K562 (cell line): ENCODE measurements at regions of chr9 and their contacts with region 1.

Region 1: GRCh38 chr9:128159784-128160602 is at the start of gene BBLN:
- DNase-seq: peak; percentile 99 to 100 (median 100)
- ATAC-seq: peak; percentile 91
- H3K4me3 ChIP-seq: peak within 1 kb of the TSS; percentile 72
- H3K27ac ChIP-seq: peak within 1 kb of the TSS; percentile 90
- H3K4me1 ChIP-seq: peaks cover 10 to 43% of the 10 kb centered on the region in 2 experiments
- H3K27me3 ChIP-seq: no peaks in the 10 kb centered on the region
- CTCF ChIP-seq: peak in 1 of 3 experiments; percentile 24; a peak in 2 of 6 replicates
- EP300 ChIP-seq: peak; percentile 16; the same call in 1 of the 2 replicates
- POLR2A ChIP-seq: peak; percentile 97
- RAD21 ChIP-seq: peak; percentile 10 to 20; a peak in 2 of 4 replicates
- polyA plus RNA-seq, gene BBLN: 4.2 to 13.7 TPM

Region 2: DNA sequence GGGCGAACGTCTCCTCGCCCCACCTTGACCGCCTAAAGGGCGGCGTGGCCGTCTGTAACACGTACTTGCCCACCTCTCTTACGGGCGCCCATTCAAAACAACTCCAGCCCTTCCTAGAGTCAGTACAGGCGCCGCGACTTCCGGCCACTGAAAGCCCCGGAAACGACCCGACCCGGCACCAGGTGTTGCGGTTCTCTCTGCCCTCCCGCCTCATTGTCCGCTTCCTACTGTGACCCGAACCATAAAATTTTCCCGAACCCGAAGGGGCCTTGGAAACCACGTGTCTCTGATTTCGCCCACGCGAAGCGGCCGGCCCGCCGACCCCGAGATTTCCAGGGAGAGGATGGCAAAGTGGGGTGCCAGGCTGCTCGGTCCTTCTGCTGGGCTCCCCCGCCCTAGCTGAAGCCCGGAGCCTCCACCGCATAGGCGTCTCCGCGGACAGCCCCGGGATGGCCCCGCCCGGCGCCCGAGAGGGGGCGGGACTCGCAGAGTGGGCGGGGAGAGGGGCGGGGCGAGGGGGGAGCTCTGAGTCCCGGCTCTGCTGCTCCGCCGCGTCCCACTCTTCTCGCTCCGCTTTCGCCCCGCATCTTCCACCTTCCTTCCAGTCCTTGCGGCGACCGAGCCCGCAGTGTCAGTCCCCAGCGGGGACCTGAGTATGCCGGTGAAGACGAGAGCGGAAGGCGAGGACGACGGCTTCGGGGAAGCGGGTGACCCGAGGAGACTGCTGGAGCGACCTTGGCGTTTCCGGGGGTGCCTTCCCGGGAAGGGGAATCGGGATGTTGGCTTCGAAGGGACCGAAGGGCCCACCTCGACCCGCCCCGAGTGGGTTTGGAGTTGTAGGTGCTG is 31.8 kb before region 1 on chr9:
- CTCF ChIA-PET with region 1: no interaction called
- POLR2A ChIA-PET with region 1: no interaction called
- in situ Hi-C with region 1: no loop called
- intact Hi-C with region 1: loop called (anchors 1 kb)
- DNase-seq: peak; percentile 89 to 93 (median 90)
- ATAC-seq: peak; percentile 82
- H3K4me3 ChIP-seq: peak overlapping the region; percentile 98
- H3K27ac ChIP-seq: peak overlapping the region; percentile 93
- H3K4me1 ChIP-seq: peaks cover 10 to 38% of the 10 kb centered on the region in 2 experiments
- H3K27me3 ChIP-seq: no peaks in the 10 kb centered on the region
- CTCF ChIP-seq: no peak
- EP300 ChIP-seq: no peak
- POLR2A ChIP-seq: peak; percentile 71; the same call in 1 of the 2 replicates
- RAD21 ChIP-seq: no peak

Region 3: GRCh38 chr9:128175102-128175563 is 15.1 kb after region 1 on chr9:
- CTCF ChIA-PET with region 1: no interaction called
- POLR2A ChIA-PET with region 1: interaction called, 155 read pairs
- in situ Hi-C with region 1: no loop called
- intact Hi-C with region 1: no loop called
- DNase-seq: no peak
- ATAC-seq: no peak
- H3K4me3 ChIP-seq: no peak overlapping the region
- H3K27ac ChIP-seq: peak overlapping the region; percentile 5; the same call in 1 of the 3 replicates
- H3K4me1 ChIP-seq: peaks cover 0 to 24% of the 10 kb centered on the region in 2 experiments; a peak in 3 of 5 replicates
- H3K27me3 ChIP-seq: no peaks in the 10 kb centered on the region
- CTCF ChIP-seq: no peak
- EP300 ChIP-seq: no peak
- POLR2A ChIP-seq: no peak
- RAD21 ChIP-seq: no peak

Region 4: GRCh38 chr9:128182893-128183588 is 23.0 kb after region 1 on chr9:
- CTCF ChIA-PET with region 1: no interaction called
- POLR2A ChIA-PET with region 1: interaction called, 155 read pairs
- in situ Hi-C with region 1: no loop called
- intact Hi-C with region 1: no loop called
- DNase-seq: no peak
- ATAC-seq: peak; percentile 9
- H3K4me3 ChIP-seq: no peak overlapping the region
- H3K27ac ChIP-seq: no peak overlapping the region
- H3K4me1 ChIP-seq: peaks cover 10 to 22% of the 10 kb centered on the region in 2 experiments; a peak in 4 of 5 replicates
- H3K27me3 ChIP-seq: no peaks in the 10 kb centered on the region
- CTCF ChIP-seq: no peak
- EP300 ChIP-seq: no peak
- POLR2A ChIP-seq: no peak
- RAD21 ChIP-seq: no peak

Region 5: GRCh38 chr9:128191406-128192046 is 31.5 kb after region 1 on chr9 and contains the start of gene CIZ1:
- CTCF ChIA-PET with region 1: no interaction called
- POLR2A ChIA-PET with region 1: interaction called, 15 read pairs
- in situ Hi-C with region 1: no loop called
- intact Hi-C with region 1: loop called (anchors 1 kb)
- DNase-seq: peak; percentile 96 to 99 (median 99)
- ATAC-seq: peak; percentile 96
- H3K4me3 ChIP-seq: peak within 1 kb of the TSS; percentile 92
- H3K27ac ChIP-seq: peak within 1 kb of the TSS; percentile 82
- H3K4me1 ChIP-seq: peaks cover 26 to 34% of the 10 kb centered on the region in 2 experiments
- H3K27me3 ChIP-seq: no peaks in the 10 kb centered on the region
- CTCF ChIP-seq: peak; percentile 87 to 97 (median 95)
- EP300 ChIP-seq: peak; percentile 59
- POLR2A ChIP-seq: no peak
- RAD21 ChIP-seq: peak; percentile 35 to 43
- polyA plus RNA-seq, gene CIZ1: 6.6 to 12.6 TPM

Region 6: DNA sequence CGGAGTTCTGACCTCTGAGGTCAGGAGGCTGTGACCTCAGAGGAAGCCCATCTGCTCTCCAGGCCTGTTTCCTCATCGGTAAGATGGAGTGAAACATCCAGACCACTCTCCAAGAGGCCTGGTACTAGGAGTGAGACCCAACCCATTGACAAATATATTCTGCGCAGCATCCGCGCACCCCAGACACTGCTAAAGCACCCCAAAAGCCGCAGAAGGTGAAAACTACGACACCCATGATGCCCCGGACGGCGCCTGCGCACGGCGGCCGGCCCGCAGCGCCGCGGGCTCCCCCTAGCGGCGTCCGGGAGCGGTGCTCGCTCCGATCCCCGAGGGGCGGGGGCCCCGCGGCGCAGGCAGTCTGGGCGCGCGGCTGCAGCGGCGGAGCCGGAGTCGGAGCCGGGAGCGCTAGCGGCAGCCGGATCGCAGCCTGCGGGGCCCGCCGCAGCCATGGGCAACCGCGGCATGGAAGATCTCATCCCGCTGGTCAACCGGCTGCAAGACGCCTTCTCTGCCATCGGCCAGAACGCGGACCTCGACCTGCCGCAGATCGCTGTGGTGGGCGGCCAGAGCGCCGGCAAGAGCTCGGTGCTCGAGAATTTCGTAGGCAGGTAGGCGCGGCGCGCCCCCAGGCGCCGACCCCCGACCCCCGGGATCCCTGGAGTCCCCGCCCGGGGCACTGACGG is 43.2 kb after region 1 on chr9 and contains the start of gene DNM1:
- CTCF ChIA-PET with region 1: no interaction called
- POLR2A ChIA-PET with region 1: interaction called, 7 read pairs
- in situ Hi-C with region 1: no loop called
- intact Hi-C with region 1: loop called (anchors 5 kb)
- DNase-seq: peak; percentile 91 to 100 (median 100)
- ATAC-seq: peak; percentile 92
- H3K4me3 ChIP-seq: peak within 1 kb of the TSS; percentile 55
- H3K27ac ChIP-seq: peak within 1 kb of the TSS; percentile 20; the same call in 2 of the 3 replicates
- H3K4me1 ChIP-seq: peaks cover 19 to 36% of the 10 kb centered on the region in 2 experiments
- H3K27me3 ChIP-seq: no peaks in the 10 kb centered on the region
- CTCF ChIP-seq: peak; percentile 96 to 99 (median 97)
- EP300 ChIP-seq: peak; percentile 45
- POLR2A ChIP-seq: no peak
- RAD21 ChIP-seq: peak; percentile 46 to 67
- polyA plus RNA-seq, gene DNM1: 0.39 to 0.58 TPM

Region 7: GRCh38 chr9:129685220-129685932 is 1525.4 kb after region 1 on chr9:
- CTCF ChIA-PET with region 1: no interaction called
- POLR2A ChIA-PET with region 1: no interaction called
- in situ Hi-C with region 1: loop called (anchors 5 kb)
- intact Hi-C with region 1: no loop called
- DNase-seq: no peak
- ATAC-seq: no peak
- H3K4me3 ChIP-seq: no peak overlapping the region
- H3K27ac ChIP-seq: no peak overlapping the region
- H3K4me1 ChIP-seq: peaks cover 0 to 30% of the 10 kb centered on the region in 2 experiments; a peak in 3 of 5 replicates
- H3K27me3 ChIP-seq: peaks cover 22 to 49% of the 10 kb centered on the region in 2 experiments; a peak in 4 of 5 replicates
- CTCF ChIP-seq: no peak
- EP300 ChIP-seq: no peak
- POLR2A ChIP-seq: no peak
- RAD21 ChIP-seq: no peak